ENCODE measurements at regions of chr10 and their contacts with region 1.

Region 1: DNA sequence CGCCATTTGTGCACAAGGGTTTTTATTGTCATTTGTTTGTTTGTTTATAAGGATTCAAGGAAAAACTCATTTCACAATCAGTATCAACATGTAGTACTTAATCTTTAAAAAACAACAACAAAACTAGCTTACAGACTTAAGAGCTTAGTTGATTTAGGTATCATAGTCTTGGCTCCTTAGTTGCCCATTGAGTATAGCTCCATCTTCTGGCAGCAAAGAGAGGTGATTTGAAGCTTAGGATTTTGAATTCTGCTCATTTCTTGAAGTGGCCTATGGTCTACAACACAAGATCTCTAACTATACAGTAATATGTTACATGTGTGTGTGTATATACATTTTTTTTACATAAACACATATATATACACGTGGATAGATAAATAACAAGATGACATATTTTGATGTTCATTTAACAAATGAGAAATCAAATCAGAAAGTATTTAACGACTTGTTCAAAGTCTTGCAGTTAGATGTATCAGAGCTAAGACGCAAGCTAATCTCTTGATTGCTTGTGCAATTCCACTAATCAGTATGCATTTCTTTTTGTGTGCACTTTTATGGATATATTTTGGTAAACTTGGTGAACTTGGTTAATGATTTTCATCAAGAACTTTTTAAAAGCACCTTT is 307.3 kb downstream of the CAMK1D start:
- DNase-seq: peak; percentile 78
- H3K4me3 Mint-ChIP-seq: no peak overlapping the region
- H3K27ac Mint-ChIP-seq: peak overlapping the region; percentile 62
- H3K4me1 Mint-ChIP-seq: peaks cover 26% of the 10 kb centered on the region
- H3K27me3 Mint-ChIP-seq: no peaks in the 10 kb centered on the region

Region 2: GRCh38 chr10:12348870-12349628 is 307.6 kb before region 1 on chr10 and contains the start of gene CAMK1D:
- intact Hi-C with region 1: loop called (anchors 5 kb)
- DNase-seq: peak; percentile 95
- H3K4me3 Mint-ChIP-seq: peak within 1 kb of the TSS; percentile 90
- H3K27ac Mint-ChIP-seq: peak within 1 kb of the TSS; percentile 97
- H3K4me1 Mint-ChIP-seq: peaks cover 34% of the 10 kb centered on the region
- H3K27me3 Mint-ChIP-seq: peaks cover 53% of the 10 kb centered on the region
- total RNA-seq, gene CAMK1D: 5.6 and 6.6 TPM in 2 replicates

Region 3: DNA sequence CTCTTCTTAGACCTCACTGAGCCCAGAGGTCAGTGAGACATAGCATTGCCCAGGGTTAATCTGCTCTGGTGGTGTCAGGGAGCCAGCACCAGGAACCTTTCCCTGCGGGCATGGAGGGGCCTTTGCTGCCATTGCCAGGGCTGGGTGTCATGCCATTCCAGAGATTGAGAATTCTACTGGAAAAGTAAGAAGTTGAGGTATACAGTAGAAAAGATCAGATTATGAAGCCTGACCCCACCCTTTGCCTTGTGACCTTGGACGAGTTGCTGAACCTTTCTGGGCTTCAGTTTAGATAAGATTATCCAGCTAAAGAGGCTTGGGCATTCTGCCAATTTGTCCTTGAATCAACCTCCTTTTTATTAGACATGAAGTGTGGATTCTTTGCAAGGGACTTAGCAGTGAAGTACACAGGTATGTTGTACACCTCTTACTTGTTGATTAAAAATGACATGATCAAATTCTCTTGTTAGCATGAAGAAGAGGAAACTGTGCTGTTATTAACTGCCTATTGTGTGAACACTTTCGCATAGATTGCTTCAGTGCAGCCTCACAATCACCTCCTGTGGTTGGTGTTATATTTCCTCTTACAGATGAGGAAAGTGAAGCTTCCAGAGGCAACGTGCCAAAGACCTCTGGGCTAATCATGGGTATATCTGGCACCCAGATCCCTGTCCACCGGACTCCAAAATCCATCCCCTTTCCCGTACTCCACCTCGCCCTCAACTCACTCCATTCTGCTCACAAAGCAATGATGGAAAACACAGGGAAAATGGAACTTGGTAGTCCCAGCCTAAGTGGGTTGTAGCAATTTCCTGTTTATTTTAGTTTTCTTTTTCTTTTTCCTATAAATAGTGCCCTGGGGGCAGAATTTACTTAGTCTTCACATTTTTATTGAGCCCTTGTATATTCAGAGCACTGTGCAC is 156.0 kb before region 1 on chr10:
- intact Hi-C with region 1: loop called (anchors 10 kb)
- DNase-seq: no peak
- H3K4me3 Mint-ChIP-seq: no peak overlapping the region
- H3K27ac Mint-ChIP-seq: no peak overlapping the region
- H3K4me1 Mint-ChIP-seq: peaks cover 15% of the 10 kb centered on the region
- H3K27me3 Mint-ChIP-seq: no peaks in the 10 kb centered on the region

Region 4: GRCh38 chr10:12594448-12594944 is 62.1 kb before region 1 on chr10:
- intact Hi-C with region 1: loop called (anchors 5 kb)
- DNase-seq: peak; percentile 87
- H3K4me3 Mint-ChIP-seq: peak overlapping the region; percentile 61
- H3K27ac Mint-ChIP-seq: peak overlapping the region; percentile 88
- H3K4me1 Mint-ChIP-seq: peaks cover 80% of the 10 kb centered on the region
- H3K27me3 Mint-ChIP-seq: no peaks in the 10 kb centered on the region

Measured in activated CD4-positive, alpha-beta T cell treated with anti-CD3 and anti-CD28 coated beads, Interleukin-2, amount 10 ng/mL, durations not matched to agents 24 days and 14 days (primary cell).